ENCODE measurements at regions of chr16 and their contacts with region 1.

Region 1: GRCh38 chr16:87765776-87766484 is at the start of gene KLHDC4:
- DNase-seq: peak; percentile 88 to 89
- ATAC-seq: peak; percentile 90 to 97 (median 96)
- H3K4me3 ChIP-seq: peak within 1 kb of the TSS; percentile 66 to 100 (median 95)
- H3K27ac ChIP-seq: peak within 1 kb of the TSS in 9 of 10 donors; percentile 77 to 94 (median 86)
- H3K4me1 ChIP-seq: peaks cover 5 to 23% (median 19%) of the 10 kb centered on the region in 9 donors
- H3K27me3 ChIP-seq: peaks cover 0 to 1% (median 0%) of the 10 kb centered on the region in 7 donors
- CTCF ChIP-seq: no peak
- total RNA-seq, gene KLHDC4: 7.8 to 19.0 (median 12.9) TPM

Region 2: GRCh38 chr16:87387942-87388817 is 377.8 kb before region 1 on chr16:
- intact Hi-C with region 1: loop called in 2 of 10 experiments (anchors 10 kb)
- DNase-seq: peak; percentile 82 to 97
- ATAC-seq: peak; percentile 59 to 85 (median 74)
- H3K4me3 ChIP-seq: peak overlapping the region in 7 of 10 donors; percentile 23 to 41 (median 29)
- H3K27ac ChIP-seq: peak overlapping the region; percentile 83 to 95 (median 88)
- H3K4me1 ChIP-seq: peaks cover 10 to 45% (median 41%) of the 10 kb centered on the region in 9 donors
- H3K27me3 ChIP-seq: no peaks in the 10 kb centered on the region
- CTCF ChIP-seq: no peak

Region 3: GRCh38 chr16:87395193-87395842 is 370.6 kb before region 1 on chr16:
- intact Hi-C with region 1: loop called in 3 of 10 experiments (anchors 5 to 10 kb)
- DNase-seq: no peak
- ATAC-seq: no peak
- H3K4me3 ChIP-seq: no peak overlapping the region
- H3K27ac ChIP-seq: no peak overlapping the region
- H3K4me1 ChIP-seq: peaks cover 10 to 54% (median 34%) of the 10 kb centered on the region in 9 donors
- H3K27me3 ChIP-seq: no peaks in the 10 kb centered on the region
- CTCF ChIP-seq: no peak

Region 4: DNA sequence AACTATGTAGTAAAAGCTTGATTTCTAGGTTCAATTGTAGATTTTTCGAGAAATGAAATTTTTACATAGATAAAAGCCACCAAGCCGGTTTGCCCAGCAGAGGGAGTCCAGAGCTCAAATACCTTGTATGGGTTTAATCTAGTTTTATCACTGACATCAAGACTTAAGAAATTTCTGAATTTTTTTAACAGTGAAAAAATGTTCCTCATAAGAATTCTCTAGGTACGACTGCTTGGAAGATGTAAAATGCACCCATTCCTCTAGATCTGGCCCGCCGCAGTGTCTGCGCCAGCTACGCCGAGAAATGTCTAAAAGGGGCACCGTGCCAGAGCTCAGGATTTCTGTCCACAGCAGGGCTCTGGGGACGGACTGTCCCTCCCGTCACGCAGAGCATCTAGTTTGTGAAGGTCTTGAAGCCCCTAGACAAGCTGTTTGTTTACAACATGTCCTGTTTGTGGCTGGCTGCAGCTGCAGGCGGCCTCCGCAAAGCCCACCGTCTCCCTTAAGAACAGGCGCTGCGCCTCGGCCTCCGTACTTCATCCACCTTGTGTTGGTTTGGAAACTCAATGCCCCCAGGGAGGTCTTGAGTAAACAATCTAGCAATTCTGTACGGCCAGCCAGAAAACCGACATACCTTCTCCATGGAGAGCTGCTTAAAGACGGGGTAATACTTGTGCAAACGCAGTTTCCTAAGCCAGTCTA is 349.0 kb before region 1 on chr16:
- intact Hi-C with region 1: loop called in 1 of 10 experiments (anchors 10 kb)
- DNase-seq: no peak
- ATAC-seq: no peak
- H3K4me3 ChIP-seq: no peak overlapping the region
- H3K27ac ChIP-seq: no peak overlapping the region
- H3K4me1 ChIP-seq: peaks cover 0 to 5% (median 0%) of the 10 kb centered on the region in 9 donors
- H3K27me3 ChIP-seq: no peaks in the 10 kb centered on the region
- CTCF ChIP-seq: peak; percentile 37 to 80 (median 70)

Region 5: DNA sequence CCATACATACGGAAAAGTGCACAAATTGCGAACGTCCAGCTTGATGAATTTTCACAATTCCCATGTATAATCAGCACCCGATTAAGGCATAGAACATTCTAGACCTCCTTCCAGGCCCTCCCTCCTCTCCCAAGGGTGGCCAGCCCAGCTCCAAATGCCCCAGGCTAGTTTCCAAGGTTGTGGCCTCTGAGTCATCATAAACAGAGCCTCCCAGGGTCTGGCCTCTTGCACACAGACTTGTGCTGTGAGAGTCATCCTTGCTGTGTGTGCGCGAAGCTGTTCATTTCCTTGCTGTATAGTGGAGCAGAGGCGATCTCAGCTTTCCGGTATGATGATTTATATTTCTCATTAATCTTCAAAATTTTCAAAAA is 184.1 kb before region 1 on chr16:
- intact Hi-C with region 1: loop called in 4 of 10 experiments (anchors 5 kb)
- DNase-seq: peak; percentile 64 to 78
- ATAC-seq: peak; percentile 85 to 93 (median 88)
- H3K4me3 ChIP-seq: peak overlapping the region in 4 of 10 donors; percentile 9 to 30 (median 24)
- H3K27ac ChIP-seq: peak overlapping the region; percentile 69 to 87 (median 80)
- H3K4me1 ChIP-seq: peaks cover 4 to 25% (median 18%) of the 10 kb centered on the region in 9 donors
- H3K27me3 ChIP-seq: peaks cover 0 to 52% (median 31%) of the 10 kb centered on the region in 7 donors
- CTCF ChIP-seq: no peak

Region 6: DNA sequence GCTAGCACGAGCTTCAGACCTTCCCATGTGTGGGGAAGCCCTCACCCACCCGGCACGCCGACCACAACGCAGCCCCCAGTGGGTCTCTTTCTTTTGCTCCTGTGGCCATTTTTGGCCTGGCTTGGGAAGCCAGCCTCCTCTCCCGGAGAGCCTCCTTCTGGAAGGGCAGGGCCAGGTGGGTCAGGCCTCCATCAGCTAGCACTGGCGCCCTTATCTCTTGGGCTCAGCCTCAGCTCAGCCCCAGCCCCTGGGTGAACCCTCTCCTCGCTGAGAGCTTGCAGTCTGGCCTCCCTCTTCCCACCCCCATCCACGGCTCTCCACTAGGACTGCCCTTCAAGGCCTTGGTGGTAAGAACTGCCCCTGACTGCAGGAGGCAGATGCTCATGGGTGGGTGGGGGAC is 178.3 kb before region 1 on chr16:
- intact Hi-C with region 1: loop called (anchors 1 to 5 kb)
- DNase-seq: no peak
- ATAC-seq: no peak
- H3K4me3 ChIP-seq: no peak overlapping the region
- H3K27ac ChIP-seq: no peak overlapping the region
- H3K4me1 ChIP-seq: peaks cover under 1 to 13% (median 8%) of the 10 kb centered on the region in 9 donors
- H3K27me3 ChIP-seq: peaks cover 0 to 68% (median 37%) of the 10 kb centered on the region in 7 donors
- CTCF ChIP-seq: no peak

Region 7: DNA sequence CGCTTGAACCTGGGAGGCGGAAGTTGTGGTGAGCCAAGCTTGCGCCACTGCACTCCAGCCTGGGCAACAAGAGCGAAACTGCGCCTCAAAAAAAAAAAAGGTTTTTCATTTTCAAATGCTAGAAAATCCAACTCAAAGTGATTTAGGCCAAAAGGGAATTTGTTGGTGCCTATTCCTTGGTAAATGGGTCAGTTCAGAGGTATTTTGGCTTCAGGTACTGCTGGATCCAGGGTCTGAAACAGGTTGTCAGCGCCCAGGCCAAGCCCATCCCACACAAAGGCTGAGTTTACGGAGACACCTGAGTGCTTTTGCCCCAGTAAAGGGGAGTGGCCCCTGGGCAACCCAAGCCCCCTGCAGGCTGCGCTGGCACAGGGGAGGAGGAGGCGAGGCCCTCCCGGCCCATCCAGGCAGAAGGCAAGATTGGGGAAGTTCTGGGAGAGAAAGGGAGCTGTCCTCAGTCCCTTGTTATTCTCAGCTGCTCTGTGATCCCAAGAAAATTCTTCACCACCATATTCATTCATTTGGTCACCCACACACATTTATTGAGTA is 172.1 kb before region 1 on chr16:
- intact Hi-C with region 1: loop called in 9 of 10 experiments (anchors 1 to 5 kb)
- DNase-seq: no peak
- ATAC-seq: no peak
- H3K4me3 ChIP-seq: no peak overlapping the region
- H3K27ac ChIP-seq: no peak overlapping the region
- H3K4me1 ChIP-seq: peaks cover 0 to 5% (median 4%) of the 10 kb centered on the region in 9 donors
- H3K27me3 ChIP-seq: peaks cover 0 to 65% (median 28%) of the 10 kb centered on the region in 7 donors
- CTCF ChIP-seq: no peak

Measured in heart right ventricle (tissue), 16 donors.